Motor neuron (in vitro differentiated cells): ENCODE measurements at regions of chr2 and their contacts with region 1.

Region 1: GRCh38 chr2:119174216-119175037 is 15.9 kb upstream of the C1QL2 start:
- ATAC-seq: peak in 5 of 8 experiments; percentile 15 to 92 (median 67)
- H3K4me3 ChIP-seq: no peak overlapping the region
- H3K27ac ChIP-seq: no peak overlapping the region
- H3K4me1 ChIP-seq: no peaks in the 10 kb centered on the region

Region 2: GRCh38 chr2:119011162-119011909 is 163.1 kb before region 1 on chr2:
- in situ Hi-C with region 1: loop called in 1 of 9 experiments (anchors 25 kb)
- ATAC-seq: peak; percentile 85 to 100 (median 98)
- H3K4me3 ChIP-seq: peak overlapping the region in 2 of 5 donors; percentile 7 to 11
- H3K27ac ChIP-seq: no peak overlapping the region
- H3K4me1 ChIP-seq: no peaks in the 10 kb centered on the region